PC-3 (cell line): ENCODE measurements at regions of chr11 and their contacts with region 1.

Region 1: DNA sequence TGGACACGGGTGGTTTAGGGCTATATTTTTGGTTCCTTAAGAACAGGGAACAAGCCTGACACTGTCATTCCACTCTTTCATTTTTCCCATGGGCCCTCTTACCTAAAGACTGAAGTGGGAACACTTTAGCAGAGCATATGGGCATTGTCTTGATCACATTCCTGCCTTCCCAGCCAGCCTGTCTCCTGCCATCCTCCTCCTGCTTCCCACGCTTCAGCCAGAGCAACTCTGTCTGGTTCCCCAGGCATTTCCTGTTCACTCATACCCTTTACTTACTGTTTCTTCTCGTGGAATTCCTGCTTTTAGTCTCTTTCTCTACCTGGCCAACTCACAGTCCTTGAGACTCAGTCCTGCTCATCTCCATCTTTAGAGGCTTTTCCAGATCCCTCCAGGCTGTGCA is 22.8 kb downstream of the MRPL16 start:
- DNase-seq: peak; percentile 23
- ATAC-seq: no peak
- H3K4me3 ChIP-seq: peak overlapping the region; percentile 27; the same call in 1 of the 2 replicates
- H3K27ac ChIP-seq: peak overlapping the region; percentile 91
- H3K4me1 ChIP-seq: peaks cover 31% of the 10 kb centered on the region
- H3K27me3 ChIP-seq: no peaks in the 10 kb centered on the region
- CTCF ChIP-seq: no peak

Region 2: DNA sequence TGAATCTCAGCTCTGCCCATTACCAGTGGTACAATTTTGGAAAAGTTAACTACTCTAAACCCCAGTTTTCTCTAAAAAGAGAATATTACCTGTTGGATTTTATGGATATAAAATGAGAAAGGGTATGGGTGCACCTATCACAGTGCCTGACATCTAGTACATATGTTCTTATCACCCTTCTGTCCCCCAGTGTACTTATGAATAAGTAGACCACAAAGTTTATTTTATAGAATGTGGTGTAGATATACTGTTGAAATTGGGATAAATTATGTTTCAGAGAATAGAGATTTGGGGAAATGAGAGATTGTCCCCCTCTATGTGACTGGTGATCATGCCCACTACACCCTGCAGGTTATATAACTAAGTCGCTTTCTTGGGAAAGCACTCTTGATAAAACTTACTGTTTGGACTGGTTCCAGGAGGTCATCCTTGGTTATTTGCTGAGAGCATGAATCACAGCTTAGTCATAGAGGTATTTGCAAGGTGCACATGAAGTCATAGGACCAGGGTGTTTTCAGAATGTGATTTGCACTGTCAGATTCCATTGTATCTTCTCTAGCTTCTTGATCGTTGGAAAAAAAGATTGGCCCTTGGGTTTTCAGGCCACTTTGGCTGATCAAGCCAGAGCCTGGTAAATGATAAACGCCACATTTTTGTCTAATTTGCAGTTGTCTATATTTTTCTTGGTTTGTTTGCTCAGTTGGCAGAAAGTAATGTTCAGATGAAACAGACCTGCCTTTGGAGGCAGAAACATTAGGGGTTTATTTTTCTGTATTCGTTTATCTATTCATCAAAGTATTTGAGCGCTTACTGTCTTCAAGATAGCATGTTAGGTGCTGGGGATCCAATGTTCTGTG is 11.4 kb before region 1 on chr11:
- CTCF ChIA-PET with region 1: no interaction called
- POLR2A ChIA-PET with region 1: interaction called, 3 read pairs
- intact Hi-C with region 1: loop called (anchors 1 kb)
- DNase-seq: peak; percentile 99
- ATAC-seq: peak; percentile 83
- H3K4me3 ChIP-seq: peak overlapping the region; percentile 22; the same call in 1 of the 2 replicates
- H3K27ac ChIP-seq: peak overlapping the region; percentile 39
- H3K4me1 ChIP-seq: peaks cover 32% of the 10 kb centered on the region
- H3K27me3 ChIP-seq: no peaks in the 10 kb centered on the region
- CTCF ChIP-seq: no peak

Region 3: DNA sequence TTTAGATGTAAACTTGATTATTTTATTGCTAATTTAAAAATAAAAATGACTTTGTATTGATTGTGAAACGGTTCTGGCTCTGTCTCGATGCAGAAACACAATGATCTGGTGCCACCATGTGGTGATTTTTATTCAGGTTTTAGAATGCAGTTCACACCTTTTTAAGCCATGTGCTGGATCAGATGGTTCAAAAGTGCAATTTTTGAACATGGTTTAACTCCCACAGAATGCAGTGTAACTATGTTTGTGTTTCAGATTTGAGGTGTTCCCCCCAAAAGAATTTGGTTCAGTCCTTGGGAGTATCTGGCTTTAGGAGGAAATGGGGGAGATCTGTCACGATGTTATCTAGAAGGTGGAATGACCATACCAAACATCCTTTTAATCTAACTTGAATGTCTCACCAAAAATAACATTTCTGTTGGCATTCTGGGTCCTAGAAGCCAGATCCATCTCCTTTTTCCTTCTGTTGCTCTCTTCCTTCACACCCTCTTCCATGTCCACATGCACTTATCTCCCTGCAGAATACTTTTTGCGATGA is 14.9 kb after region 1 on chr11:
- CTCF ChIA-PET with region 1: interaction called, 13 read pairs
- POLR2A ChIA-PET with region 1: no interaction called
- intact Hi-C with region 1: loop called (anchors 2 kb)
- DNase-seq: peak; percentile 84
- ATAC-seq: peak; percentile 46
- H3K4me3 ChIP-seq: no peak overlapping the region
- H3K27ac ChIP-seq: no peak overlapping the region
- H3K4me1 ChIP-seq: peaks cover 25% of the 10 kb centered on the region
- H3K27me3 ChIP-seq: no peaks in the 10 kb centered on the region
- CTCF ChIP-seq: peak; percentile 89

Region 4: DNA sequence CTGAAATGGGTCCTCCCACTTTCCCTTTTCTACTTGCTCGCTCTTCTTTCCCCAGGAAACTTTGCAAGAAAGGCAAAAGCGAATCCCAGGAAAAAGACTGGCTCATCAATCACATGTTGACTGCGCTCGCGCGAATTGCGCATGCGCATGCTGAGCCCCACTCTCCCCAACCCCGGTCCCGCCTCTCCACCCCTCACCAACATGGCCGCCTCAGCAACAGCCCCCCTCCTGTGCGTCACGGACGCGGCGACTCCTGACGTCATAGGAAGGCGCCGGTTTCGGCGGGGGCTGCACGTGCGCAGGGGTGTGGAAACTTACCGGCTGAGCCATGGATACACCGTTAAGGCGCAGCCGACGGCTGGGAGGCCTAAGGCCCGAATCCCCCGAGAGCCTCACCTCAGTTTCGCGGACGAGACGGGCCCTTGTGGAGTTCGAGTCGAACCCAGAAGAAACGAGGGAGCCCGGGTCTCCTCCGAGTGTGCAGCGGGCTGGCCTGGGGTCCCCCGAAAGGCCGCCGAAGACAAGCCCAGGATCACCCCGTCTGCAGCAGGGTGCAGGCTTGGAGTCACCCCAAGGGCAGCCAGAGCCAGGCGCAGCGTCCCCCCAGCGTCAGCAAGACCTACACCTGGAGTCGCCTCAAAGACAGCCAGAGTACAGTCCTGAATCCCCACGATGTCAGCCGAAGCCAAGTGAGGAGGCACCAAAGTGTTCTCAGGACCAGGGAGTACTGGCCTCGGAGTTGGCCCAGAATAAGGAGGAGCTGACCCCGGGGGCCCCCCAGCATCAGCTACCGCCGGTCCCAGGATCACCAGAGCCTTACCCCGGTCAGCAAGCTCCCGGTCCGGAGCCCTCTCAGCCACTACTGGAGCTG is 1054.2 kb after region 1 on chr11 and contains the start of gene CCDC86:
- CTCF ChIA-PET with region 1: no interaction called
- POLR2A ChIA-PET with region 1: interaction called, 12 read pairs
- intact Hi-C with region 1: no loop called
- DNase-seq: peak; percentile 98
- ATAC-seq: peak; percentile 73
- H3K4me3 ChIP-seq: peak within 1 kb of the TSS; percentile 92
- H3K27ac ChIP-seq: peak within 1 kb of the TSS; percentile 59
- H3K4me1 ChIP-seq: peaks cover 31% of the 10 kb centered on the region
- H3K27me3 ChIP-seq: no peaks in the 10 kb centered on the region
- CTCF ChIP-seq: no peak
- total RNA-seq, gene CCDC86: 67.9 and 108 TPM in 2 replicates